ENCODE measurements at regions of chr5 and their contacts with region 1.

Region 1: DNA sequence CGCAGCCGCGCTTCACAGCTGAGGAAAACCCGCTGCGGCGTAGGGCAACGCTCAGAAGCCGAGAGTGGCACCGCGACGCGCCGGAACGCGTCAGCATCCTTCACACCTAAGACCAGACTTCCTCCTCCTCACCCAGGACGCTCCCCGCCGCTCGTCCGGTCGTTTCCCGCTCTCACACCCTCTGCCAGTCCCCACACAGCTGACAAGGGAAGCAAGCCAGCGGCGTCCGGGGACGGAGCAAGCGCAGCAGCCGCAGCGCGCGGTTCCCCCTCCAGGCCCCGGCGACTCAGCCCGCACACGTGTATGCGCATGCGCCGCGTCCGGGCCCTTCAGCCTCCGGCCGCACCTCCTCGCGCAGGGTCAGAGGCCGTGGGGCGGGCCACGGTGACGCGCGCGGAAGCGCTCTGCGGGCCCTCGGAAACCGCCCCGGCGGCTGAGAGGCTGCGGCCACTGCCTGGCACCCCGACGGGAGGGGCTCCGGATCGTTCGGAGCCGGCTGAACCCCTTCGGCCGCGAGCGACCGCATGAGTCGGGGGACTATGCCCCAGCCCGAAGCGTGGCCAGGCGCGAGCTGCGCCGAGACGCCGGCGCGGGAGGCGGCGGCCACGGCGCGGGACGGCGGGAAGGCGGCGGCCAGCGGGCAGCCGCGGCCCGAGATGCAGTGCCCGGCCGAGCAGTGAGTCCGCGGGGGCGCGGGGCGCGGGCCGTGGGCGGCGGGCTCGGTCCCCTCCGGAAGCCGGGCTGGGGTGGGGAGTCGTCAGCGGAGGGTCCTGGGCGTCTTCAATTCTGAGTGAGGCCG is at the start of gene OTULIN:
- DNase-seq: peak; percentile 80
- ATAC-seq: peak; percentile 74
- H3K4me3 ChIP-seq: peak within 1 kb of the TSS; percentile 84
- H3K27ac ChIP-seq: peak within 1 kb of the TSS; percentile 90
- H3K4me1 ChIP-seq: peaks cover 3% of the 10 kb centered on the region
- H3K27me3 ChIP-seq: no peaks in the 10 kb centered on the region
- CTCF ChIP-seq: no peak
- EP300 ChIP-seq: 0 out of 4 replicates have a peak, but pooled peaks of 1 of the 2 experiments have one; percentile 9
- POLR2A ChIP-seq: peak; percentile 95
- RAD21 ChIP-seq: no peak
- polyA plus RNA-seq, gene OTULIN: 6.6 to 9.9 TPM

Region 2: DNA sequence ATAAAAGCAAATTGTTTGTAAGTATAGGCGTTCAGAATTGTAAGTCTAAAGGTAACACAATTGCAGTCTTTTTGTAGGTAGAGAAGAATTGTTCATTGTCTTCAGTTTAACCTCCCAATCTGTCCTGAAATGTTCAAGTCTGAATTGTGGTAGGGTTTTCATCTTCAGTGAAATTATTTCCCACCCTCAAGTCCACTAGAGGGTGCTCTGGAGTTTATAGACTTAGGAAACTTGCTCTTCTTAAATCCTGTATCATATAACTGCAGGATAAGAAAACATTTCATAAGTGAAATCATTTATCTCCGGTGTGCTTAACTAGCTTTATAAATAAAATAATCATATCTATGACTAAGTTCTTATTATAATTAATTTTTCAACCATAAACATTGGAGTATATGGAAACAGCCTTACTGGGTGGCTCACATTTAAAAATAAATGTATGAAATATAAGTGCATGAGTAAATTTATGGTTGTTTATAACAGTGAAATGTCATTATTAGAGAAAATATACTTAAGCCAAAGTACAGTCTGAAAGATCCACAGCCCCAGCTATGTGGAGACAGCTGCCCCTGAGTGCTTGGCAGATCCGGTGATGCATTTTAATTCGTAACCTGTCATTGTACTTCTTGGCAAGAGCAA is 265.3 kb before region 1 on chr5:
- CTCF ChIA-PET with region 1: no interaction called
- POLR2A ChIA-PET with region 1: no interaction called
- RAD21 ChIA-PET with region 1: no interaction called
- SMC1A ChIA-PET with region 1: no interaction called
- in situ Hi-C with region 1: no loop called
- intact Hi-C with region 1: no loop called
- DNase-seq: no peak
- ATAC-seq: peak; percentile 71
- H3K4me3 ChIP-seq: no peak overlapping the region
- H3K27ac ChIP-seq: no peak overlapping the region
- H3K4me1 ChIP-seq: no peaks in the 10 kb centered on the region
- H3K27me3 ChIP-seq: no peaks in the 10 kb centered on the region
- CTCF ChIP-seq: peak; percentile 50 to 62 (median 56)
- EP300 ChIP-seq: no peak
- POLR2A ChIP-seq: no peak
- RAD21 ChIP-seq: peak; percentile 84

Region 3: DNA sequence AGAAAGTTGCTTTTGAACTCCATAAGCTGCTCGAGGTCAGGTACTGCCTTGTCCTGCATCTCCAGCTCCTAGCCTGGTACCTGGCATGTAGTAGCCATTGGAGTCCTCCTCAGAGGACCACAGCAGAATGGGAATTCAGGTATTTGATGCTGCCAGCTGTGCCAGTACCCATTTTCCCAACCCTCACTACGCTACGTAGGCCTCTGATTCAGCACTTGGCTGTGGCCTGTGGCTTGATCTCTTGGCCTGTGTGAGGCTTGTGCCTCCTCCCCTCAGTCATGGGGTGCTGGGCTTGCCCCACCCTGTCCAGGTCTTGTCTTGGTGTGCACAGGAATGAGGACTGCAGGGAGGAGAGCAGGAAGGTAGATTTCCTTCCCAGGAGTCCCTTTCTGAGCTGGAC is 11.8 kb after region 1 on chr5:
- CTCF ChIA-PET with region 1: interaction called, 8 read pairs
- POLR2A ChIA-PET with region 1: interaction called, 31 read pairs
- RAD21 ChIA-PET with region 1: interaction called, 20 read pairs
- SMC1A ChIA-PET with region 1: interaction called, 55 read pairs
- in situ Hi-C with region 1: no loop called
- intact Hi-C with region 1: no loop called
- DNase-seq: no peak
- ATAC-seq: peak; percentile 67
- H3K4me3 ChIP-seq: peak overlapping the region; percentile 62; the same call in 1 of the 2 replicates
- H3K27ac ChIP-seq: peak overlapping the region; percentile 71
- H3K4me1 ChIP-seq: peaks cover 76% of the 10 kb centered on the region
- H3K27me3 ChIP-seq: no peaks in the 10 kb centered on the region
- CTCF ChIP-seq: no peak
- EP300 ChIP-seq: no peak
- POLR2A ChIP-seq: peak; percentile 37; the same call in 1 of the 2 replicates
- RAD21 ChIP-seq: no peak

Measured in GM12878 (cell line).